ENCODE measurements at regions of chr20 and their contacts with region 1.

Region 1: DNA sequence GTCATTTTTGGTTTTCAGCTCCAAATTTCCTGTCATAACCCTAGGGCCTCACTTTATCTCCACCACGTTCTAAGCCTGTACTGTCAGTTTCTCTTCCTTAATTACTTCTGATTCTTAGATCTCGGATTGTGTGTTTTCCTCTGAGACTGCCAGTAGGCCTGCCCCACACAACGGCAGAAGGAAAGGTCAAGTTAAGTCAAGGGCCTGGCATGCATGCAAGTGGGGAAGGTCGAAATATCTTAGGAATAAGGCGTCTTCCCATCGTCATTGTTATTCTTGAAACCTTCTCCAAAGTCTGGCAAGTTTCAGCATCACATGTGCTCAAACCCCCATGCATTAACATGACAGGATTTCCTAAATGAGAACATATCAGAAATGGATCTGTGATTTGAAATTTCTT is 203.5 kb upstream of the TSHZ2 start:
- DNase-seq: no peak
- ATAC-seq: no peak
- H3K4me3 ChIP-seq: no peak overlapping the region
- H3K4me3 Mint-ChIP-seq: no peak overlapping the region
- H3K27ac ChIP-seq: no peak overlapping the region
- H3K27ac Mint-ChIP-seq: no peak overlapping the region
- H3K4me1 ChIP-seq: no peaks in the 10 kb centered on the region
- H3K4me1 Mint-ChIP-seq: no peaks in the 10 kb centered on the region
- H3K27me3 ChIP-seq: no peaks in the 10 kb centered on the region
- H3K27me3 Mint-ChIP-seq: peaks cover 4% of the 10 kb centered on the region
- CTCF ChIP-seq: no peak

Region 2: DNA sequence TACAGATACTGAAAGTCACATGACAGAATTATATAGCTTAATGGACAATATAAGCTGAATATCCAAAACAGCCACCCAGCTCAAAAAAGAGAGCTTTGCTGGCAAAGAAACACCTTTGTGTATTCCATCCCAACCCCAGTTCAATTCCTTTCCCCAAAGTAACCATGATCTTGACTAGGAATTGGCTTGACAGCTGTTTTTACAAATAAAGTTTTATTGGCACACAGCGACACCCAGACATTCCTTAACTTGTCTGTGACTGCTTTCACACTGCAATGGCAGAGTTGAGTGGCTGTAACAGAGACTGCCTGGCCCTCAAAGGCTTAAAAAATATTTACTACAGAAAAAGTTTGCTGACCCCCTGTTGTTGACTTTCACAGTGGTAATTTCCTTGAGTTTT is 60.6 kb before region 1 on chr20:
- CTCF ChIA-PET with region 1: no interaction called
- POLR2A ChIA-PET with region 1: no interaction called
- intact Hi-C with region 1: loop called in 1 of 2 experiments (anchors 2 kb)
- DNase-seq: no peak
- ATAC-seq: no peak
- H3K4me3 ChIP-seq: no peak overlapping the region
- H3K4me3 Mint-ChIP-seq: no peak overlapping the region
- H3K27ac ChIP-seq: no peak overlapping the region
- H3K27ac Mint-ChIP-seq: no peak overlapping the region
- H3K4me1 ChIP-seq: no peaks in the 10 kb centered on the region
- H3K4me1 Mint-ChIP-seq: no peaks in the 10 kb centered on the region
- H3K27me3 ChIP-seq: no peaks in the 10 kb centered on the region
- H3K27me3 Mint-ChIP-seq: peaks cover 3% of the 10 kb centered on the region
- CTCF ChIP-seq: no peak

Region 3: GRCh38 chr20:52943185-52943841 is 174.6 kb after region 1 on chr20:
- CTCF ChIA-PET with region 1: no interaction called
- POLR2A ChIA-PET with region 1: no interaction called
- intact Hi-C with region 1: no loop called
- DNase-seq: no peak
- ATAC-seq: no peak
- H3K4me3 ChIP-seq: no peak overlapping the region
- H3K4me3 Mint-ChIP-seq: no peak overlapping the region
- H3K27ac ChIP-seq: no peak overlapping the region
- H3K27ac Mint-ChIP-seq: no peak overlapping the region
- H3K4me1 ChIP-seq: no peaks in the 10 kb centered on the region
- H3K4me1 Mint-ChIP-seq: no peaks in the 10 kb centered on the region
- H3K27me3 ChIP-seq: no peaks in the 10 kb centered on the region
- H3K27me3 Mint-ChIP-seq: no peaks in the 10 kb centered on the region
- CTCF ChIP-seq: no peak

Measured in CD8-positive, alpha-beta T cell (primary cell).